Uterus (tissue), 4 donors: ENCODE measurements at regions of chr5 and their contacts with region 1.

Region 1: DNA sequence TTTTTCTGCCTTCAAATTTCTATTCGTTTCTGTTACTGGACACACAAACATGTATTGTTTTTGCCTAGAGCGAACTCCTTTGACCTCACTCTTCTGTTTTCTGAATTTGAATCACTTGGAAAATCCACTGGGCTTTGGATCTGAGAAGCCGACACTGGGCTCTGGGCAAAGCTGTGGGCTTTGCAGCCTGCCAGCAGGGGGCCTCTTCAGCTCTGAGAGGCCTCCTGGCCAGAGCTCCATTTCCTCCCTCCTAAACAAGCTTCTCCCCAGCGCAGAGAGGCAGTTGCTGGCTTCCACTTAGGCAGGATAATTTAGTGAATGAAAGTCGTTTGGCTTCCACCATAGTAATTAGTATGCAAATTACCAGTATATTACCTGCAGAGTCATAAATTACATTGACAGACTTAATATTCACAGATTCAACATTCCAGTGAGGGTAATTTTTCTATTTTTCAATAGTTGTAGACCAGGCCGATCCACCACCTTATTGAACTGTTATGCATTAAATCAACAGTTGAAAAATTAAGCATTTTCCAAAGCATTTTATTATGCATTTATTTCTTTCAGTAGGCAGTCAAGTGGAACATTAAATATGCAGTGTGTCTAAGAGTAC is 104.0 kb upstream of the ZNF366 start:
- DNase-seq: peak; percentile 74 to 76
- H3K4me3 ChIP-seq: no peak overlapping the region
- H3K27ac ChIP-seq: no peak overlapping the region
- H3K4me1 ChIP-seq: peaks cover 0 to 6% of the 10 kb centered on the region in 2 donors
- H3K27me3 ChIP-seq: no peaks in the 10 kb centered on the region
- CTCF ChIP-seq: peak; percentile 79 to 94 (median 86)
- POLR2A ChIP-seq: no peak

Region 2: DNA sequence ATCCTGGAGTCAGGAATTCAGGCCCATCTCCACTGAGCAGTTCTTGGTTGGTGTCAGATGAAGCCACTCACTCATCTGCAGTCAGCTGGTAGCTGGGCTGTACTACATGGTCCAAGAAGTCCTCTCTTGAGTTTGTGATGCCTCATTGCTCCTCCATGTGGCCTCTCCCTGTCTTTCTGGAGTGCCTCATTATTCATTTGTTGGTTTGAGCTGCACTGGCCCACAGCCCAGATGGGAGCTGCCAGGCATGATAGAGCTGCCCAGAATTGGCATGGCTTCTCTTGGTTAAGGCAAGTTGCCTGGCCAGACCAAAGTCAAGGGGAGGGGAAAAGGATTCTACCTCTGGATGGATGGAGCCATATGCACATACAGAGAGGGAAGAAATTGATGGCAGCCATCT is 283.1 kb before region 1 on chr5:
- intact Hi-C with region 1: no loop called
- DNase-seq: peak in 1 of 2 donors; percentile 19
- H3K4me3 ChIP-seq: no peak overlapping the region
- H3K27ac ChIP-seq: no peak overlapping the region
- H3K4me1 ChIP-seq: no peaks in the 10 kb centered on the region
- H3K27me3 ChIP-seq: no peaks in the 10 kb centered on the region
- CTCF ChIP-seq: no peak
- POLR2A ChIP-seq: no peak

Region 3: GRCh38 chr5:72692231-72692637 is 81.0 kb after region 1 on chr5:
- intact Hi-C with region 1: no loop called
- DNase-seq: no peak
- H3K4me3 ChIP-seq: no peak overlapping the region
- H3K27ac ChIP-seq: no peak overlapping the region
- H3K4me1 ChIP-seq: no peaks in the 10 kb centered on the region
- H3K27me3 ChIP-seq: no peaks in the 10 kb centered on the region
- CTCF ChIP-seq: no peak
- POLR2A ChIP-seq: no peak

Region 4: DNA sequence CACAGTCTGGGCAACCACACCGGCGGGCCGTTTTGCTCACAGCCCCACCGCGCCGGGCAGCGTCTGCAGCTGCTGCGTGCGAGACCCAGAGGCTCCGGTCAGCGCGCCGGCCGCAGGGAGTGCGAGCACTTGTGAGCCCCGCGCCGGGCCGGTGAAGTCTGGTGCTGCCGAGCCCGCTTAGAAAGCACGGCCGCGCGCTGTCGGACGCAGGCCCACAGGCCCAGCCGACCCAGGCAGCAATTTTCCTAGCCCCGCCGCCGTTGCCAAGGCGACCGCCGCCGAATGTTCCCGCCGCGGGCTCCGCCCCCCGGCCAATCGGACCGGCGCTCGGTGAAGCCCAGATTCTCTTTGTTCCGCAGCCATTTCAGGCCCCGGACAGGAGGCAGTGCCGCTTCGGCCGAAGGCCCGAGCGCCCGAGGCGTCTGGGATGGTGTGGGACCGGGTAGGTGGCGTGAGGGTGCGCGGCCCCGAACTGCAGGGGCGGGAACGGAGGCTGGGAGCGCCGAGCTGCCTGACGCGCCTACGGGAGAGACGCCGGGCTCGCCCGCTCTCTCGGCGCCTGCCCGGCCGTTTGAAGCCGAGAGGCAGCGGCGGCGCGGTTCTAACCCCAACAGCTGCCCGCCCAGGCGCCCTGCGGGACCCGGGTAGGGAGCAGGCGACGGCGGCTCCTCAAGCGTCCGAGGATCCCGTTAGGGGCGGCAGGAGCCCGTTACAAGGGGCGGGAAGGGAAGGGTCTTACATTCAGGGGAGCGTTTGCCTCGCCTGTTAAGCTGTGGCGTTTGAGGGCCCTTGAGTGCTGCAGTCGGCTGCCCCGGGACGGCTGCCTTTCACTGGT is 205.3 kb after region 1 on chr5 and contains the start of gene TNPO1:
- intact Hi-C with region 1: loop called (anchors 10 kb)
- DNase-seq: peak; percentile 92 to 95
- H3K4me3 ChIP-seq: peak within 1 kb of the TSS; percentile 68 to 80
- H3K27ac ChIP-seq: peak within 1 kb of the TSS; percentile 93 to 99
- H3K4me1 ChIP-seq: no peaks in the 10 kb centered on the region
- H3K27me3 ChIP-seq: no peaks in the 10 kb centered on the region
- CTCF ChIP-seq: peak in 3 of 4 experiments; percentile 5 to 40 (median 5)
- POLR2A ChIP-seq: peak; percentile 97 to 98
- total RNA-seq, gene TNPO1: 78.2 to 209 (median 125) TPM